Left ventricle myocardium superior (tissue), 1 donor: ENCODE measurements at regions of chr5 and their contacts with region 1.

Region 1: DNA sequence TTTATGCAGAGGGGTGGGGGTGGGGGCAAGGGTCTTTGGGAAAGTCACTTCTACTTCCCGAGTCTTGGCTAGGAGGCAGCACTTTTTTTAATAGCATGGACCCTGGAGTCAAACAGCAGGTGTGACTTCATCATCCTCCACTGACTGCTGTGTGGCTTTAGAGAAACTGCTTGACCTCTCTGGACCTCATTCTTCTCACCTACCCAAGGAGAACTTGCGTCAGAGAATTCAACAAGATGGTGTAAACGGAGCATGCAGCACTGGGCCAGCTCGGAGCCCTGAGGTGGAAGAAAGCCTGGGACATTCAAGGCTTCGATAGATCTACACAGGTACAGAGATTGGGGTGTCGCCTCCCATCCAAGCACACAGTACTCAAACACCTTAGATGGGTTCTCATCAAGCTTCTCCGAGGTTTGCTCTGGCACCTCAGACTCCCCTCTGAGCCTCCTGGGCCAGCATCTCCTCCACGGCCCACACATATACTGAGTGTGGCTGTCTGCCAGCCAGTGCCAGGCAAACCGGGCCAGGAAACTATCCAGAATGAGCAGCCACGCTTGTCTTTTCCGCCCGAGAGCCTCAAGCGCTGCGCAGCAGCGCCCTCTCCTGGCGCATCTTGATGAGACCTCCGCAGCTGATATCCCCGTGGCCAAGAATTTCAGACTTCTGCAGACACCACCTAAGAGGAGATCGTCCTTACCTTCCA is 4.6 kb upstream of the SLC25A48 start:
- DNase-seq: peak; percentile 84
- ATAC-seq: peak; percentile 67

Region 2: DNA sequence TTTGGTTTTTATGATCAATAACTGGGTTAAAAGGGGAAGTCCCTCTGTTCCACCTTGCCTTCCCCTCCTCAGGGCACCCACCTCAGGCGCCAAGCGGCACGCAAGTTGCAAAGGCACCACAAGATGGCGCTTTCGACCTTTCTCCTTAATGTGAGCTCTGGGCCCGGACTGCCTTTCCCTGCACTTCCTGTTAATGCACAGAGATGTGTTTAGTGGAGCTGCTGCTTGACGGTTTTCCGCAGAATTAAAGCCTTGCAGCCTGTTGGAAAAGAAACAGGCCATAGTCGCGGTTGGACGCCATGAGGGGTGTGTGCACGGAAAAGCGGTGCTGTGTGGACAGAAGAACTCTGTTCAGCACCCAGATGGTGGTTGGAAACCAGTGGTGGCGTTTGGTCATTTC is 269.0 kb before region 1 on chr5:
- intact Hi-C with region 1: loop called (anchors 5 kb)
- DNase-seq: peak; percentile 78
- ATAC-seq: peak; percentile 87